ENCODE measurements at regions of chr16 and their contacts with region 1.

Region 1: GRCh38 chr16:30650369-30651123 is at the start of gene PRR14:
- DNase-seq: peak; percentile 96 to 100 (median 98)
- ATAC-seq: peak; percentile 85
- H3K4me3 ChIP-seq: peak within 1 kb of the TSS; percentile 92 to 100
- H3K4me3 Mint-ChIP-seq: peak within 1 kb of the TSS; percentile 99
- H3K27ac ChIP-seq: peak within 1 kb of the TSS; percentile 86 to 94
- H3K27ac Mint-ChIP-seq: peak within 1 kb of the TSS; percentile 98
- H3K4me1 ChIP-seq: peaks cover 20% of the 10 kb centered on the region
- H3K4me1 Mint-ChIP-seq: peaks cover 22% of the 10 kb centered on the region
- H3K27me3 ChIP-seq: no peaks in the 10 kb centered on the region
- H3K27me3 Mint-ChIP-seq: no peaks in the 10 kb centered on the region
- CTCF ChIP-seq: no peak
- total RNA-seq, gene PRR14: 48.4 to 51.0 TPM

Region 2: GRCh38 chr16:29995911-29996772 is 654.4 kb before region 1 on chr16 and contains the start of gene INO80E:
- CTCF ChIA-PET with region 1: no interaction called
- POLR2A ChIA-PET with region 1: no interaction called
- intact Hi-C with region 1: loop called in 1 of 2 experiments (anchors 2 kb)
- DNase-seq: peak; percentile 98 to 100 (median 99)
- ATAC-seq: peak; percentile 96
- H3K4me3 ChIP-seq: peak within 1 kb of the TSS; percentile 93 to 100
- H3K4me3 Mint-ChIP-seq: peak within 1 kb of the TSS; percentile 94
- H3K27ac ChIP-seq: peak within 1 kb of the TSS; percentile 99
- H3K27ac Mint-ChIP-seq: peak within 1 kb of the TSS; percentile 97
- H3K4me1 ChIP-seq: peaks cover 14% of the 10 kb centered on the region
- H3K4me1 Mint-ChIP-seq: peaks cover 39% of the 10 kb centered on the region
- H3K27me3 ChIP-seq: no peaks in the 10 kb centered on the region
- H3K27me3 Mint-ChIP-seq: no peaks in the 10 kb centered on the region
- CTCF ChIP-seq: no peak
- total RNA-seq, gene INO80E: 49.8 to 59.4 TPM

Region 3: GRCh38 chr16:30534368-30535105 is 116.0 kb before region 1 on chr16 and contains the start of gene ZNF747:
- CTCF ChIA-PET with region 1: interaction called, 3 read pairs
- POLR2A ChIA-PET with region 1: interaction called, 3 read pairs
- intact Hi-C with region 1: loop called in 1 of 2 experiments (anchors 1 kb)
- DNase-seq: peak; percentile 77 to 95 (median 92)
- ATAC-seq: peak; percentile 80
- H3K4me3 ChIP-seq: peak within 1 kb of the TSS; percentile 82 to 96
- H3K4me3 Mint-ChIP-seq: peak within 1 kb of the TSS; percentile 89
- H3K27ac ChIP-seq: peak within 1 kb of the TSS; percentile 77 to 97
- H3K27ac Mint-ChIP-seq: peak within 1 kb of the TSS; percentile 96
- H3K4me1 ChIP-seq: peaks cover 13% of the 10 kb centered on the region
- H3K4me1 Mint-ChIP-seq: peaks cover 38% of the 10 kb centered on the region
- H3K27me3 ChIP-seq: no peaks in the 10 kb centered on the region
- H3K27me3 Mint-ChIP-seq: no peaks in the 10 kb centered on the region
- CTCF ChIP-seq: no peak
- total RNA-seq, gene ZNF747: 6.2 to 6.3 TPM

Region 4: DNA sequence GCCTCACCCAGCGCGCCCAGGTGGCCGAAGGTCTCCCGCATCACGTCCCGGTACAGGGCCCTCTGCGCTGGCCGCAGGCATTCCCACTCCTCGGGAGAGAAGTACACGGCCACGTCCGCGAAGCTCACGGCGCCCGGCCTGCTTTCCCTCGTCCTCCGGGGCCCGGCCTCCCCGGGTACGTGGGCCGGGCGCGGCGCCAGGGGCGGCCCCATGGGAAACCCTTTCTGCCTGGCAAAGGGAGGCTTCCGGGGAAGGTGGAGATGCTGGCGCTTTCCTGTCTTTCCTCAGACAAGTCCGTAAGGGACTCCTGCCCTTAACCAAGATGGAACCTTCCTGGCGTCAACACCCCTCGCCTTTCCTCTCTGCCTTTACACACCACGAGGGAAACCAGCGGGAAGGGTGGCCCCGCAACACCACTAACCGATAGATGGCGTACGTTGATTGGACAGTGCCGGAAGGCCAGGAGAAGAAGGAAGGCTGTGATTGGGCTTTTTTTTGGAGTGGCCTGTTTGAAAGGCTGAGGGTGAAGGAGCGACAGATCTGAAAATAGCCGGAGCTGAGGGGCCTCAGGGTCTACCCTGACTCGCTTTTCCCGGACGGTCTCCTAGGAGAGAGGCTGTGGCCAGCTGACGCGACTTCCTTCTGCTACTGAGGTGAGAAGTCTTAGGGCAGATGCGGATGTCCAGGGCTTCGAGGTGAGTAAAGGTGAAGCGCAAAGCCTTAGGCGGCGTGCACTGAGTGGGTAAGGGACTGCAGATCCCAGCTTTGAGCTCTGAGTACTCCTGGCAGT is 65.0 kb before region 1 on chr16 and contains the start of gene ZNF785:
- CTCF ChIA-PET with region 1: no interaction called
- POLR2A ChIA-PET with region 1: no interaction called
- intact Hi-C with region 1: loop called in 1 of 2 experiments (anchors 2 kb)
- DNase-seq: peak; percentile 81 to 98 (median 91)
- ATAC-seq: peak; percentile 99
- H3K4me3 ChIP-seq: peak within 1 kb of the TSS; percentile 68 to 78
- H3K4me3 Mint-ChIP-seq: peak within 1 kb of the TSS; percentile 94
- H3K27ac ChIP-seq: peak within 1 kb of the TSS; percentile 44 to 61
- H3K27ac Mint-ChIP-seq: peak within 1 kb of the TSS; percentile 91
- H3K4me1 ChIP-seq: peaks cover 12% of the 10 kb centered on the region
- H3K4me1 Mint-ChIP-seq: peaks cover 27% of the 10 kb centered on the region
- H3K27me3 ChIP-seq: no peaks in the 10 kb centered on the region
- H3K27me3 Mint-ChIP-seq: no peaks in the 10 kb centered on the region
- CTCF ChIP-seq: no peak
- total RNA-seq, gene ZNF785: 5.0 to 6.9 TPM

Region 5: DNA sequence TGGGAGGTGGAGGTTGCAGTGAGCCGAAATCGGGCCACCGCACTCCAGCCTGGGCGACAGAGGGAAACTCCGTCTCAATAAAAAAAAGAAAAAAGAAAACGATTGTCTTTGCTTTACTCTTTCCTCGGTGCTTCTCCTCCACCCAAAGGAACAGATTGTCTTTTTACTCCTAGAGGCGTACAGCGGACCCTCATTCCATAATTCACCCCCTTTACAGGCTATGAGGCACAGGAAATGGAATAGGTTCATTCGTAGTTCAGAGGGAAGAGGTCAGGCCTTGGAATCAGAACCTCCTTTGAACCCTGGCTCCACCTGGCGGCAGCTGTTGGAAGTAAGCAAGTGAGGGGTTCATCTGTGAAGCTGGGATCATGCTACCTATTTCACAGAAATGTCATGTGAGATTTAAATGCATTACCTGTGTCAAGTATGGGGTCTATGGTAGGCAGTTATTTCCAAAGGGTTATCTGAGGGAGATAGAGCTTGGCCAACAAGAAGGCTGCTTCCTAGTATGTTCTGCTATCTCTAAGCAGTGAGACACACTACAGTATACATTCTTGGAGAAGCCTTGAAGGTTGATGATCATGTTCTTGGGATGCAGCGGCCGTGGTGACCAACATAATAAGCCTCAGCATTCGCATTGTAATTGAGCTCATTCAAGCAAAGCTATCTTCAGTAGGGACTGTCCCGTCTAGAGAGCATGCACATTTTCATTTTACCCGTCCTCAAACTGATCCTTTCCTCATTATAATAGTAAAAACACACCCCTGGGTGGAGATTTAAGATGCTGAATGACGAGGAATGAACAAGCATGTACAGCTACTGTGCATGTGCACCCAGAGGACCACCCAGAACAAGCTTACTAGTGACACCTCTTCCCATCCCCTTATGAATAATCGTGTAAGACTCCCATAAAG is 21.7 kb before region 1 on chr16:
- CTCF ChIA-PET with region 1: interaction called, 9 read pairs
- POLR2A ChIA-PET with region 1: interaction called, 17 read pairs
- intact Hi-C with region 1: loop called (anchors 1 kb)
- DNase-seq: peak; percentile 77 to 92 (median 84)
- ATAC-seq: peak; percentile 96
- H3K4me3 ChIP-seq: peak overlapping the region in 1 of 2 experiments; percentile 10
- H3K4me3 Mint-ChIP-seq: peak overlapping the region; percentile 79
- H3K27ac ChIP-seq: peak overlapping the region in 1 of 2 experiments; percentile 19
- H3K27ac Mint-ChIP-seq: no peak overlapping the region
- H3K4me1 ChIP-seq: peaks cover 9% of the 10 kb centered on the region
- H3K4me1 Mint-ChIP-seq: peaks cover 5% of the 10 kb centered on the region
- H3K27me3 ChIP-seq: no peaks in the 10 kb centered on the region
- H3K27me3 Mint-ChIP-seq: no peaks in the 10 kb centered on the region
- CTCF ChIP-seq: peak; percentile 85

Region 6: DNA sequence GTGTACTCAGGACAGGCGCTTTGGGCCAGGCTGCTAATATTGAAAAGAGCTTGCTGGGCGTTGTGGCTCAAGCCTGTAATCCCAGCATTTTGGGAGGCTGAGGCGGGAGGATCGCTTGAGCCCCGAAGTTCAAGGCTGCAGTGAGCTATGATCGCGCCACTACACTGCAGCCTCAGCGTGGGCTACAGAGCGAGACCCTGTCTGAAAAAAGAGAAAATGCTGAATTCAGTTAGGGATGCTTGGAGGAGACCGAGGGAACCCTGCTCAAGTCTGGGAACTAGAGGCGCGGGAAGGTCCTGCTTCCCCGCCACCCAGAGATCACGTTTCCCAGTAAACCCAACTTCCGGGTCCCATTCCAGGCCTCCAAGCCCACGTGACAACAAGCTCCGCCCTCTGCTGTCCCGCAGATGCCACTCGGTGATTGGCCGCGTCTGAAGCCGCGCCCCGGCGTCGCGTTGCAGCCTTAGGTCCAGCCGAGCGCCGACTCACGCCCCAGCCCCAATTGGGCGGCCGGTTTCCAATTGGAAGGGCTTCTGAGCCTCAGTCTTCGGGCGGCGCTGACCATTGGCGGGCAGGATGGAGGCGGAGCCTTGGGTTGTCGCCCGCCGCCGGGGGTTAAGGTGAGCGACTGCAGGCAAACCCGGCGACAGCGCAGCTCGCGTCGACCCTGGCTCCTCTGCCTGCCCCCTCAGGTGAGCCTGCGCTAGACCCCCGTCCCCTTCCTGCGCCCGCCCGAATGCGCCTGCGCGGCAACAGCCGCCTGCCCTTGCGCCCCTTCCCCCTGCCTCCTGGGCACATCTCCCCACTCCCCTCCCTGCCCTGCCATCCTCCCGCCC is 97.5 kb after region 1 on chr16 and contains the start of gene PHKG2:
- CTCF ChIA-PET with region 1: no interaction called
- POLR2A ChIA-PET with region 1: interaction called, 3 read pairs
- intact Hi-C with region 1: loop called in 1 of 2 experiments (anchors 1 kb)
- DNase-seq: peak; percentile 88 to 99 (median 96)
- ATAC-seq: peak; percentile 93
- H3K4me3 ChIP-seq: peak within 1 kb of the TSS; percentile 59 to 68
- H3K4me3 Mint-ChIP-seq: peak within 1 kb of the TSS; percentile 89
- H3K27ac ChIP-seq: peak within 1 kb of the TSS; percentile 50 to 83
- H3K27ac Mint-ChIP-seq: peak within 1 kb of the TSS; percentile 66
- H3K4me1 ChIP-seq: peaks cover 12% of the 10 kb centered on the region
- H3K4me1 Mint-ChIP-seq: peaks cover 22% of the 10 kb centered on the region
- H3K27me3 ChIP-seq: no peaks in the 10 kb centered on the region
- H3K27me3 Mint-ChIP-seq: no peaks in the 10 kb centered on the region
- CTCF ChIP-seq: no peak
- total RNA-seq, gene PHKG2: 26.4 to 36.3 TPM

Region 7: DNA sequence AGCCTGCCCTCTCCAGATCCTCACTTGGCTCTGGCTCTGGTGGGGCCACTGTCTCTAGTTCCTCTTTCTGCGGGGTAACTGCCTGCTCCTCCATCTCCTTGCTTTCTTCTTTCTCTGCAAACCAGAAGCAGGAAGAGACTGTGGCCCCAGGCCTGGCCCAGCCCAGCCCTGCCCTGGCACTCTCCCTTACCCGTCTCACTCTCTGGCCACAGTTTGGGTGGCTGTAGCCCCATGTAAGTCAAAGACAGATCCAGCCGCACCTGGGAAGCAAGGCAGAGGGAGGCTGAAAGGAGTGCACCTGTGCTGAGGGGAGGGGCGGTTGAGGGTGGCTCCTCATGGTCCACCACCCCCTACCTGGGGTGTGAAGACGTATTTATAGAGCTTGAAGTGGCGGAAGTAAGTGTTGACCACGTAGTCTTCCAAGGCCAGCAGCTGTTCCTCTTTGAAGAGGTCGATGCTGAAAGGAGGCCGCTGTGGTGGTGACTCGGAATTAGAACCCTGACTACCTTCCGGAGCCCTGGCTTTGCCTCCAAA is 108.5 kb after region 1 on chr16:
- CTCF ChIA-PET with region 1: no interaction called
- POLR2A ChIA-PET with region 1: no interaction called
- intact Hi-C with region 1: no loop called
- DNase-seq: no peak
- ATAC-seq: no peak
- H3K4me3 ChIP-seq: no peak overlapping the region
- H3K4me3 Mint-ChIP-seq: no peak overlapping the region
- H3K27ac ChIP-seq: no peak overlapping the region
- H3K27ac Mint-ChIP-seq: no peak overlapping the region
- H3K4me1 ChIP-seq: peaks cover 20% of the 10 kb centered on the region
- H3K4me1 Mint-ChIP-seq: peaks cover 26% of the 10 kb centered on the region
- H3K27me3 ChIP-seq: no peaks in the 10 kb centered on the region
- H3K27me3 Mint-ChIP-seq: no peaks in the 10 kb centered on the region
- CTCF ChIP-seq: no peak

Measured in CD8-positive, alpha-beta T cell (primary cell).